Psoas muscle (tissue), 8 donors: ENCODE measurements at regions of chr6 and their contacts with region 1.

Region 1: DNA sequence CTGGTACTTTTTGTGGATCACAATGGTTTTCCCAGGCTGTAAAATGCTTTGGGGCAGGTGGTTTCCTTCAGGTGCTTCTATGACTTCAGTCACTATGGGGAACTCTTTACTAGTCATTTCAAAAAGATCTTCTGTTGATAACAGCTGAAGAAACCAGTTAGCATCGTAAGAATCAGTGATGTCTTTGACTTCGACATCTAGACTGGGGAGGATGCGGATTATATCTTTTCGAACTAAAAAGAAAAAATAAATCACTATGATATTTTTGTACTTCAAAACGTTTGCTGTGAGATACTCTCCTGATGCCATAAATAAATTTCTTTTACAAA is 87.2 kb downstream of the THEMIS start:
- DNase-seq: no peak
- ATAC-seq: no peak
- H3K4me3 ChIP-seq: no peak overlapping the region
- H3K27ac ChIP-seq: no peak overlapping the region
- H3K4me1 ChIP-seq: no peaks in the 10 kb centered on the region
- H3K27me3 ChIP-seq: peaks cover 0 to 2% (median 0%) of the 10 kb centered on the region in 3 donors
- CTCF ChIP-seq: no peak

Region 2: DNA sequence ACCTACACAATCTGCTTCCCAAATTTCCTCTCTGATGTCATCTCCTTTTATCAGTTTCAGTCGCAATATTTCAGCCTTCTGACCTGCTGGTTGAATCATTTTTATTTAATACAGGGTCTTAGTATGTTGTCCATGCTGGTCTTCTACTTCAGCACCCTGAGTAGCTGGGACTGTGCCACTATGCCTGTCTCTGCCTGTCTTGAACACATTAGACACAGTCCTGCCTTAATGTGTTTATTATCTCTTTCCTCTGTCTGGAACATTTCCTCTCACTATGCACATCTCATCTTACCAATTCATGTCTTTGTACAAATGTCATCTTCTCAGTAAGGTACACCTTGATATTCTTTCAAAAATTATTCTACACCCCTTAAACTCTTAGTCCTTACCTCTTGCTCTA is 19.3 kb before region 1 on chr6:
- intact Hi-C with region 1: loop called in 1 of 2 experiments (anchors 1 kb)
- DNase-seq: no peak
- ATAC-seq: no peak
- H3K4me3 ChIP-seq: no peak overlapping the region
- H3K27ac ChIP-seq: no peak overlapping the region
- H3K4me1 ChIP-seq: no peaks in the 10 kb centered on the region
- H3K27me3 ChIP-seq: peaks cover 0 to 1% (median 0%) of the 10 kb centered on the region in 3 donors
- CTCF ChIP-seq: no peak

Region 3: DNA sequence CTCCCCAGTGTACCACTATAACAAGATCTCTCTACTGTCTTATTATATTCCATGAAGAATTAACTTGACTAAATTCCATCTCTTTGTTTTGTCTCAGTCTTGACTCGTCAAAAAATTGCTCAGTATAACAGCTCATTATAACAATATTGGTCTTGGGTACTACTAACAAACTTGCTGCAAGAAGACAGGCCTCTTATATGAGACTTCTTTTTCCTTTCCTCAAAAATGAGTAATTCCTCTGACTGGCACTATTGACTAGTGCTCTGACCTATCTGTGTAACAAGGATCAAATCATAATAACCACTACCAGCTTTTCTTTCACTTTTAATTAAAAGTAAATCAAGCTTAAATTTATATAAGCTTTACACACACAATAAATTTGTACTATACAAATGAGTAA is 178.5 kb after region 1 on chr6:
- intact Hi-C with region 1: no loop called
- DNase-seq: no peak
- ATAC-seq: no peak
- H3K4me3 ChIP-seq: no peak overlapping the region
- H3K27ac ChIP-seq: no peak overlapping the region
- H3K4me1 ChIP-seq: no peaks in the 10 kb centered on the region
- H3K27me3 ChIP-seq: no peaks in the 10 kb centered on the region
- CTCF ChIP-seq: no peak